Body of pancreas (tissue), 4 donors: ENCODE measurements at regions of chr2 and their contacts with region 1.

Region 1: DNA sequence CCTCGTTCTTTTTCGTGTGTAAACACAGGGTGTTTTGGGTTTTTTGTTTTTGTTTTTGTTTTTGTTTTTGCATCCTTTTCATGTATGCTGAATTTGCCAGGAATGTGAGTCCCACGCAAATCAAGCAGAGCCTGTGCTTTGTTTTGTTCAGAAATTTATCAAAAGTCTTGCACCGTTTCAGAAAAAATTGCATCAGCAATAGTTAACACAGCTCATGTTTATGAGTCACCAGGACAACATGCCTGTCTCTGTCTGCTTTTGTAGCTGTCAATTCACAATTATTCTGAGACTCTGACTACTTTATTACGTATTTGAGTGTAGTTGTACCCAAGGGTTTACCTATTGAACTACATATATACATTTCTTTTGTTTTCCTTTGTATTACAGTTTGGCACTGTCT is 38.3 kb downstream of the MRPL44 start:
- DNase-seq: no peak
- ATAC-seq: no peak
- H3K4me3 ChIP-seq: no peak overlapping the region
- H3K27ac ChIP-seq: no peak overlapping the region
- H3K4me1 ChIP-seq: peaks cover 9% of the 10 kb centered on the region
- H3K27me3 ChIP-seq: no peaks in the 10 kb centered on the region
- CTCF ChIP-seq: no peak
- POLR2A ChIP-seq: no peak

Region 2: GRCh38 chr2:223712642-223713041 is 282.9 kb before region 1 on chr2:
- intact Hi-C with region 1: no loop called
- DNase-seq: no peak
- ATAC-seq: no peak
- H3K4me3 ChIP-seq: no peak overlapping the region
- H3K27ac ChIP-seq: no peak overlapping the region
- H3K4me1 ChIP-seq: peaks cover 21% of the 10 kb centered on the region
- H3K27me3 ChIP-seq: no peaks in the 10 kb centered on the region
- CTCF ChIP-seq: no peak
- POLR2A ChIP-seq: no peak

Region 3: DNA sequence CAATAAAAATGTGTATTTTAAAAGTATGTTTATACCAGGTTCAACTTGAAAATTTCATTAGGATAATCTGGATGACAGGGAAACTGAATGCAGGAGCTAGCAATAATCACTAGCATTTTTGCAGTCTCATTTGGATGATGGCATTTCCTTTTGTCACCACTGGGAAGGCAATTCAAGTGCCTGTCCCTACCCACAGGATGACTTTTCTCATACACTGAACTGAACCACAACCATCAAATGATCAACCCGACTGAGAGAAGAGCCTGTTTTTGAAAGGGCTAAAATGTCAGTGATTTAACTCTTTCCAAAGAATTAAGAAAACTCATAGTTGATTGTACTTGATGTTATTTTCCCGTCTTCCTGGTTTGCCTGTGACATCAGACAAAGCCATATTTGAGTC is 291.4 kb after region 1 on chr2:
- intact Hi-C with region 1: loop called (anchors 5 kb)
- DNase-seq: no peak
- ATAC-seq: no peak
- H3K4me3 ChIP-seq: no peak overlapping the region
- H3K27ac ChIP-seq: no peak overlapping the region
- H3K4me1 ChIP-seq: no peaks in the 10 kb centered on the region
- H3K27me3 ChIP-seq: no peaks in the 10 kb centered on the region
- CTCF ChIP-seq: no peak
- POLR2A ChIP-seq: no peak

Region 4: GRCh38 chr2:224308272-224308911 is 312.8 kb after region 1 on chr2:
- intact Hi-C with region 1: no loop called
- DNase-seq: no peak
- ATAC-seq: no peak
- H3K4me3 ChIP-seq: no peak overlapping the region
- H3K27ac ChIP-seq: no peak overlapping the region
- H3K4me1 ChIP-seq: peaks cover 5% of the 10 kb centered on the region
- H3K27me3 ChIP-seq: no peaks in the 10 kb centered on the region
- CTCF ChIP-seq: no peak
- POLR2A ChIP-seq: no peak